GM12878 (cell line): ENCODE measurements at regions of chr11 and their contacts with region 1.

Region 1: GRCh38 chr11:9688716-9689511 is 25.0 kb downstream of the SWAP70 start:
- DNase-seq: peak; percentile 81
- ATAC-seq: peak; percentile 92
- H3K4me3 ChIP-seq: peak overlapping the region; percentile 51
- H3K27ac ChIP-seq: peak overlapping the region; percentile 81
- H3K4me1 ChIP-seq: peaks cover 54% of the 10 kb centered on the region
- H3K27me3 ChIP-seq: no peaks in the 10 kb centered on the region
- CTCF ChIP-seq: no peak
- EP300 ChIP-seq: no peak; a peak in 1 of 4 replicates
- POLR2A ChIP-seq: no peak
- RAD21 ChIP-seq: 0 out of 2 replicates have a peak, but pooled peaks have one; percentile 13

Region 2: GRCh38 chr11:9669954-9670353 is 19.0 kb before region 1 on chr11:
- CTCF ChIA-PET with region 1: interaction called, 4 read pairs
- POLR2A ChIA-PET with region 1: interaction called, 9 read pairs
- RAD21 ChIA-PET with region 1: interaction called, 12 read pairs
- SMC1A ChIA-PET with region 1: interaction called, 14 read pairs
- in situ Hi-C with region 1: no loop called
- intact Hi-C with region 1: no loop called
- DNase-seq: no peak
- ATAC-seq: no peak; the same call in 1 of the 3 replicates
- H3K4me3 ChIP-seq: peak overlapping the region; percentile 18; the same call in 1 of the 2 replicates
- H3K27ac ChIP-seq: peak overlapping the region; percentile 3; the same call in 1 of the 2 replicates
- H3K4me1 ChIP-seq: peaks cover 7% of the 10 kb centered on the region
- H3K27me3 ChIP-seq: no peaks in the 10 kb centered on the region
- CTCF ChIP-seq: no peak
- EP300 ChIP-seq: no peak
- POLR2A ChIP-seq: no peak
- RAD21 ChIP-seq: no peak

Region 3: DNA sequence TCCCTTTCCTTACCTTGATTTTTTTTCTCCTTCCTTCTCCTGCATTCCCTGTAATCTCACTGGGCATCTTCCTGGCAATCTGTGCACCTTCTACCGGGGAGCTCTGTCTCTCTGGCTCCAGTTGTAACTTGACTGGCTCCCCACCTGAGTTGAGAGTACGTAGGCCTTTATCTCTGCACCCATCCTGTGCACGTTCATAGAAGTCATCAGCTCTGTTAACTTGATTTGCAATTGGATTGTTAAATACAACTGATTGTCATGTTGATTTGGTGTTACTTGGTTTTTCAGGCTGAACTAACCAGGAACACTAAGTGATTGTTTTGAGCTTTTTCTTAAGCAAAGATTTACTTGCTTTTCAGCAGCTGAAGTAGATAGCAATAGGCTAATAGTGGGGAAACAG is 13.2 kb before region 1 on chr11:
- CTCF ChIA-PET with region 1: interaction called, 9 read pairs
- POLR2A ChIA-PET with region 1: interaction called, 9 read pairs
- RAD21 ChIA-PET with region 1: interaction called, 12 read pairs
- SMC1A ChIA-PET with region 1: interaction called, 52 read pairs
- in situ Hi-C with region 1: no loop called
- intact Hi-C with region 1: no loop called
- DNase-seq: no peak
- ATAC-seq: peak; percentile 59
- H3K4me3 ChIP-seq: peak overlapping the region; percentile 46; the same call in 1 of the 2 replicates
- H3K27ac ChIP-seq: peak overlapping the region; percentile 11; the same call in 1 of the 2 replicates
- H3K4me1 ChIP-seq: peaks cover 14% of the 10 kb centered on the region
- H3K27me3 ChIP-seq: no peaks in the 10 kb centered on the region
- CTCF ChIP-seq: no peak
- EP300 ChIP-seq: no peak
- POLR2A ChIP-seq: no peak
- RAD21 ChIP-seq: no peak

Region 4: GRCh38 chr11:9700105-9700801 is 11.3 kb after region 1 on chr11:
- CTCF ChIA-PET with region 1: interaction called, 4 read pairs
- POLR2A ChIA-PET with region 1: interaction called, 4 read pairs
- RAD21 ChIA-PET with region 1: interaction called, 5 read pairs
- SMC1A ChIA-PET with region 1: interaction called, 10 read pairs
- in situ Hi-C with region 1: no loop called
- intact Hi-C with region 1: no loop called
- DNase-seq: no peak
- ATAC-seq: no peak
- H3K4me3 ChIP-seq: no peak overlapping the region
- H3K27ac ChIP-seq: no peak overlapping the region
- H3K4me1 ChIP-seq: peaks cover 34% of the 10 kb centered on the region
- H3K27me3 ChIP-seq: no peaks in the 10 kb centered on the region
- CTCF ChIP-seq: no peak
- EP300 ChIP-seq: no peak
- POLR2A ChIP-seq: no peak
- RAD21 ChIP-seq: no peak

Region 5: DNA sequence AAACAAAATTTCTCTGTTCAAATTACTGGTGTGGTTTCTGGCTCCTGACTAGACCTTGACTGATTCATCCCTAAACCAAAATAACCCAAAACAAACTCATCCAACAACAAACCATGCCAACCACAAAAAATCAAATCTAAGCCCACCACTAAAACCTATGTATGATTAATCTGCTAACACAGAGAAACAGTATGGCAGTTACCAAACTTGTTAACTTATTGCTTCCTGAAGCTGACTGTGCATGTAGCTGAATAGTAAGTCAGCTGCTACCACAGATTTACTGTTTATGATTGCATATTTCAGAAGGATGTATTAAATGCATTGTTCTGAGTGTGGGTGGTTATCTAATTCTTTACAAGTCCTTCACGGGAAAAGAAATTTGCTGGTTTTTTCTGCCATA is 206.1 kb after region 1 on chr11:
- CTCF ChIA-PET with region 1: no interaction called
- POLR2A ChIA-PET with region 1: no interaction called
- RAD21 ChIA-PET with region 1: no interaction called
- SMC1A ChIA-PET with region 1: no interaction called
- in situ Hi-C with region 1: no loop called
- intact Hi-C with region 1: no loop called
- DNase-seq: no peak
- ATAC-seq: no peak
- H3K4me3 ChIP-seq: no peak overlapping the region
- H3K27ac ChIP-seq: no peak overlapping the region
- H3K4me1 ChIP-seq: no peaks in the 10 kb centered on the region
- H3K27me3 ChIP-seq: no peaks in the 10 kb centered on the region
- CTCF ChIP-seq: no peak
- EP300 ChIP-seq: no peak
- POLR2A ChIP-seq: no peak
- RAD21 ChIP-seq: no peak

Region 6: DNA sequence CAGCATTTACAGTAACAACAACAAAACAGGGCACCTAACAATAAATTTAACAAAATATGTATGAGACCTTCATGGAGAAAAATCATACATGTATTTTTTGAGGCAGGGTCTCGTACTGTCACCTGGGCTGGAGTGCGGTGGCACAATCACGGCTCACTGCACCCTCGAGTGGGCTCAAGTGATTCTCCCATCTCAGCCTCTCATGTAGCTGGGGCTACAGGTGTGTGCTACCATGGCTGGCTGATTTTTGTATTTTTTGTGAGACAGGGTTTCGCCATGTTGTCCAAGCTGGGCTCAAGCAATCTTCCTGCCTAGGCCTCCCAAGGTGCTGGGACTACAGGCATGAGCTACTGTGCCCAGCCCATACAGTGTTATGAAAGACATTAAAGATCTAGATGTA is 253.1 kb after region 1 on chr11:
- CTCF ChIA-PET with region 1: no interaction called
- POLR2A ChIA-PET with region 1: no interaction called
- RAD21 ChIA-PET with region 1: no interaction called
- SMC1A ChIA-PET with region 1: no interaction called
- in situ Hi-C with region 1: no loop called
- intact Hi-C with region 1: no loop called
- DNase-seq: no peak
- ATAC-seq: no peak
- H3K4me3 ChIP-seq: no peak overlapping the region
- H3K27ac ChIP-seq: no peak overlapping the region
- H3K4me1 ChIP-seq: no peaks in the 10 kb centered on the region
- H3K27me3 ChIP-seq: no peaks in the 10 kb centered on the region
- CTCF ChIP-seq: no peak
- EP300 ChIP-seq: no peak
- POLR2A ChIP-seq: no peak
- RAD21 ChIP-seq: no peak